Heart right ventricle (tissue), 16 donors: ENCODE measurements at regions of chr10 and their contacts with region 1.

Region 1: GRCh38 chr10:96043033-96043932 is at the start of gene CCNJ:
- DNase-seq: peak; percentile 90 to 91
- ATAC-seq: peak; percentile 96 to 99 (median 98)
- H3K4me3 ChIP-seq: peak within 1 kb of the TSS; percentile 52 to 92 (median 84)
- H3K27ac ChIP-seq: peak within 1 kb of the TSS in 9 of 10 donors; percentile 79 to 94 (median 89)
- H3K4me1 ChIP-seq: peaks cover 0 to 28% (median 19%) of the 10 kb centered on the region in 9 donors
- H3K27me3 ChIP-seq: no peaks in the 10 kb centered on the region
- CTCF ChIP-seq: peak in 5 of 9 donors; percentile 22 to 51 (median 35)
- total RNA-seq, gene CCNJ: 1.8 to 3.6 (median 2.8) TPM

Region 2: DNA sequence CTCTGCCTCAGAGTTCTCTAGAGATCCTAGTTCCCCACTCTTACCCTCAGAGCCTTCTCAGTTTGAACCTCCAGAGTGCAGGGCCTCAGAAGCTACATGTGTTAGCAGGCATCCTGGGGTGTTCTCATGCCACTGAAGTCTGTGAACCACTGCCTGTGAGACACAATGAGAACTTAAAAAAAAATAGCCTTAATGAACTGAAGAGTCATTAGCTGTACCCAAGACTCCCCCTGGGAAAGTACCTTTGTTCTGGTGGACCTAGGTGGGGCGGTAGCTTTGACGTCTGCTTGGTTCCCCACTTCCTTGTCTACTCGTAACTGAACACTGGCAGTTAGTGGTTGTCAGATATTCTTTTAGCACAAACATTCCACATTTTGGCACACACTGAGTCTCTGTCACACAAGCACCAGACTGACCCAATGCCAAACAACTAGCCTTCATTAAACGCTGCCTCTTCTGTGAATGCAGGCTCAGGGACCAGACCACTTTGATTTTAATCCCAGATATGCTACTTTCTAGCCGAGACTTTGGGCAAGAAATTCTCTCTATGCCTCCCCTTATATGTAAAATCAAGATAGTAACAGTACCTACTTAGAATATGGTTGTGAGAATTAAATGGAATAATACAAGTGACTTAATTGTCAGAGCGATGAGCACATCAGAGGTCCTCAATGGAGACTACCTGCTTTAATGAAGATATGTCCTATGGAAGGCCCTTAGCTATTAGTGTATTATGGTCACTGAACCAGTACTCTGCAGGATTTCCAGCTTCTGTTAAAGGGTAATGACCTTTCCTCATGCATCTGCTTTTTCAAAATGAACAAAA is 210.9 kb before region 1 on chr10:
- intact Hi-C with region 1: no loop called
- DNase-seq: peak in 1 of 2 donors; percentile 6
- ATAC-seq: peak in 7 of 8 donors; percentile 58 to 93 (median 79)
- H3K4me3 ChIP-seq: no peak overlapping the region
- H3K27ac ChIP-seq: peak overlapping the region; percentile 10 to 74 (median 59)
- H3K4me1 ChIP-seq: peaks cover 0 to 37% (median 6%) of the 10 kb centered on the region in 9 donors
- H3K27me3 ChIP-seq: no peaks in the 10 kb centered on the region
- CTCF ChIP-seq: no peak

Region 3: DNA sequence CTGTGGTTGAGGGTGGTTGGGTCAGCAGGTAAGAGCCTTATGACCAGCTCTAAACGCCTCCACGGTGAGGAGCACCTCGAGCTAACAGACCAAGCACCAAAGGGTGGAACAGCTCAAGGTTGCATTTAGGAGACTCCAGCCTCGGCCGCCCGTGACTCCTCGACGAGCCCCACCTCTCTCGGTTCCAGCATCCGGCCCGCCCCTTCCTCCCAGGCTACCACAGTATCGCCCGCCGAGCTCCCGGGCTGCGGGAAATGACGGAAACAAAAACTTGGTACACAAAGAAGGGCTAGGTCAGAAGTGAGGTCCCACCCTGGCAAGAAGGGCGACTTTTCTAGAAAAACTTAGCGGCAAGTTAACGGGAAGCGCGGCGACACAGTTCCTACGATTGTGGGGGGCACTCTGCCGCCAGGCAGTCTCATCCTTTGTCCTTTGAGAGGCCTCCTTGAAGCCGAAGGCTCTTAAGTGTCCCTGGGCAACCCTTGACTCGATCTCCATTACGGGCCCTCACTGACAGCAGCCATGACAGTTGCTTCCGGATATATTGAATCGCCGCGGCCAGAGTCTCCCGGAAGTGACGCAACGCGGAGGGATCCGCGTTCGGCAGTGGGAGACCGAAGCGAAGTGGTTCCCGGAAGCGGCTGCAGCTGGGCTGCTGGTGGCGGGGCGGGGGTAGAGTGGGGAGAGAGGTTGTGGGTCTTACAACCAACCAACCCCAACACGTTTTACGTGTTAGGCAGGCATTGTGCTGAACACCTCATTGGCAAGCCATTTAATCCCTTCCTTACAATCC is 46.6 kb after region 1 on chr10:
- intact Hi-C with region 1: loop called in 3 of 10 experiments (anchors 1 to 5 kb)
- DNase-seq: peak; percentile 93 to 94
- ATAC-seq: peak; percentile 97 to 100 (median 99)
- H3K4me3 ChIP-seq: peak overlapping the region; percentile 64 to 84 (median 76)
- H3K27ac ChIP-seq: peak overlapping the region; percentile 76 to 99 (median 94)
- H3K4me1 ChIP-seq: peaks cover 0 to 12% (median 5%) of the 10 kb centered on the region in 9 donors
- H3K27me3 ChIP-seq: peaks cover 0 to 36% (median 32%) of the 10 kb centered on the region in 7 donors
- CTCF ChIP-seq: no peak

Region 4: DNA sequence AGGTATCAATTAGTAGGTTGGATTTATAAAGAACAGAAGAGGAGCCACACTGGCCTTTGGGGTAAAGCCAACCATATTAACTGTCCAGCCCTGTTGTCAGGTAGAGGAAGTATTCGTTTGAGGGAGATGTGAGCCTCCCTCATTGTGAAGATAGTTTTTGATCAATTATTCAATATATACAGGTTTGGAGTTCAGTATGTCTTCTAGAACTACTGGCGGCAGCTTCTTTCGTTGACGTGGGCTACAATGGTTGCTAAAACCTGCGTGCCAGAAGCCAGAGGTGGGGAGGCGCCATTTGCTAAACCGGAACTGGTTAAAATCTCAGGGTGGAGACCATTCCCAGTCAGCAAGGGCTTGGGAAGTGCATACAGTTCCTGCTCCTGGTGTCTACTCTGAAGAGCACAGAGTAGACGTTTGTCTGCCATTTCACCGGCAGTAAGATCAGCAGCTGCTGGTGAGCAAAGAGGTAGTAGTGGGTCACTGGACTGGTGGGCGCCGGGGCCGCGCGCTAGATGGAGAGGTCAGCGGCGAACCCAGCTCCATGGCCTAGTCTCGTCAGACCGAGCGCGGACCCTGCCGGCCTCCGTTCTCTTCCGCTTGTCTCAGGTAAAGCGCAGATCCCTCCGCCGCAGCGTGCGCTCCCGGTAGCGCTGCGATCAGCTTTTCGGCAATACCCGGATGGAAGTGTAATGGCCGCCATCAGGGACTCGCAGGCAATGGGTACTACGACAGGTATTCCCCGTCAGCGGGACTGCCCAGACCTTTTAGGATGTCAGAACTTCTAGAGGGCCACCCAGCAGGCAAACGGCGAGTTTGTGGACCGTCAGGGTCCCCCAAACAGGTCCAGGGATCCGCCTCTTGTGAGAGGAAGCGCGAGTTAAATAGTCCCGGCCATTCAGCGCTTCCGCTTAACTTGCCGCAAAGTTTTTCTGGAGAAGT is 86.4 kb after region 1 on chr10 and contains the start of gene ZNF518A:
- intact Hi-C with region 1: loop called in 4 of 10 experiments (anchors 1 to 10 kb)
- DNase-seq: peak; percentile 91 to 95
- ATAC-seq: peak; percentile 96 to 99 (median 98)
- H3K4me3 ChIP-seq: peak within 1 kb of the TSS; percentile 62 to 84 (median 76)
- H3K27ac ChIP-seq: peak within 1 kb of the TSS; percentile 84 to 100 (median 97)
- H3K4me1 ChIP-seq: peaks cover 0 to 25% (median 13%) of the 10 kb centered on the region in 9 donors
- H3K27me3 ChIP-seq: peaks cover 0 to 47% (median 42%) of the 10 kb centered on the region in 7 donors
- CTCF ChIP-seq: no peak
- total RNA-seq, gene ZNF518A: 11.0 to 15.0 (median 12.7) TPM